Panc1 (cell line): ENCODE measurements at regions of chr2 and their contacts with region 1.

Region 1: DNA sequence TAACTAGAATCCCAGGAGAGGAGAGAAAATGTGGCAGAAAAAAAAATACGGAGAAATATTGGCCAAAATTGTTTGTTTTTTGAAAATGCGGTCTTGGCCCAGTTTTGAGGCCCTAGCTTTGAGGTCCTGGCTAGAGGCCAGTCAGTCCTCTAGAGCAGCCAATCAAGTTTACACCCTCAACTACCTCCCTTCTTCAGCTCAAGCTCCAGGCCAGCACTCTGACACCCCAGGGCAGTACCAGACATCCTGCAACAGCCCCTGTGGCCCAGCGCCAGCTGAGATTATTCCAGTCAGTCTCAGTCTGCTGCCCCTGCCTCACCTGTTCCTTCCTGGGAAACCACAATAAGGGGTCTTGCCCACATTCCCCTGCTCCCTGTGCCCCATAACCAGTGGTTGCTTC is 107.7 kb downstream of the UGGT1 start:
- DNase-seq: no peak
- ATAC-seq: no peak
- H3K4me3 ChIP-seq: no peak overlapping the region
- H3K27ac ChIP-seq: no peak overlapping the region
- H3K4me1 ChIP-seq: no peaks in the 10 kb centered on the region; the same call in 1 of the 2 replicates
- H3K27me3 ChIP-seq: no peaks in the 10 kb centered on the region
- CTCF ChIP-seq: no peak

Region 2: DNA sequence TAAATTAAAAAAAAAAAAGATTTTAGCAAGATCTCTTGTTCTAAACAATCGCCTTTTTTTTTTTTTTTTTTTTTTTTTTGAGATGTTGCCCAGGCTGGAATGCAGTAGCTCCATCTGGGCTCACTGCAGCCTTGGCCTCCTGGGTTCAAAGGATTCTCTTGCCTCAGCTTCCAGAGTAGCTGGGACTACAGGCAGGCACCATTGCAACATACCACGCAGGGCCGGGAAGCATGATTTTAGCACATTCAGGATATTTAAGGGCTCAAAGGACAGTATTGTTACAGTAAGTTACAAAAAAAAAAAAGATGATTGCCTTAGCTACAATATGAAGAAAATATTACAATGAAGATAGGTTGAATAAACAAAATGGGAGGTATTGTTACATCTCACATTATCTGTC is 141.3 kb before region 1 on chr2:
- CTCF ChIA-PET with region 1: interaction called, 13 read pairs
- POLR2A ChIA-PET with region 1: no interaction called
- in situ Hi-C with region 1: no loop called
- intact Hi-C with region 1: no loop called
- DNase-seq: no peak
- ATAC-seq: no peak
- H3K4me3 ChIP-seq: no peak overlapping the region
- H3K27ac ChIP-seq: no peak overlapping the region
- H3K4me1 ChIP-seq: no peaks in the 10 kb centered on the region
- H3K27me3 ChIP-seq: no peaks in the 10 kb centered on the region; the same call in 1 of the 2 replicates
- CTCF ChIP-seq: no peak

Region 3: GRCh38 chr2:128178650-128179460 is 19.8 kb before region 1 on chr2:
- CTCF ChIA-PET with region 1: interaction called, 10 read pairs
- POLR2A ChIA-PET with region 1: no interaction called
- in situ Hi-C with region 1: no loop called
- intact Hi-C with region 1: no loop called
- DNase-seq: no peak
- ATAC-seq: peak; percentile 85
- H3K4me3 ChIP-seq: no peak overlapping the region
- H3K27ac ChIP-seq: no peak overlapping the region
- H3K4me1 ChIP-seq: no peaks in the 10 kb centered on the region
- H3K27me3 ChIP-seq: no peaks in the 10 kb centered on the region
- CTCF ChIP-seq: peak; percentile 84